ENCODE measurements at regions of chr7 and their contacts with region 1.

Region 1: GRCh38 chr7:92621026-92621540 is 30.9 kb upstream of the FAM133B start:
- DNase-seq: peak; percentile 79
- ATAC-seq: peak; percentile 79
- H3K4me3 ChIP-seq: peak overlapping the region; percentile 12; the same call in 1 of the 2 replicates
- H3K27ac ChIP-seq: peak overlapping the region; percentile 75
- H3K4me1 ChIP-seq: peaks cover 16% of the 10 kb centered on the region
- H3K27me3 ChIP-seq: no peaks in the 10 kb centered on the region
- CTCF ChIP-seq: peak; percentile 64 to 94 (median 76); a peak in 5 of 6 replicates
- EP300 ChIP-seq: no peak
- POLR2A ChIP-seq: no peak
- RAD21 ChIP-seq: peak; percentile 95

Region 2: GRCh38 chr7:92641921-92642511 is 20.9 kb after region 1 on chr7:
- CTCF ChIA-PET with region 1: interaction called, 16 read pairs
- POLR2A ChIA-PET with region 1: no interaction called
- RAD21 ChIA-PET with region 1: interaction called, 17 read pairs
- SMC1A ChIA-PET with region 1: interaction called, 18 read pairs
- in situ Hi-C with region 1: no loop called
- intact Hi-C with region 1: loop called (anchors 2 kb)
- DNase-seq: no peak
- ATAC-seq: peak; percentile 83
- H3K4me3 ChIP-seq: peak overlapping the region; percentile 39
- H3K27ac ChIP-seq: peak overlapping the region; percentile 73
- H3K4me1 ChIP-seq: peaks cover 25% of the 10 kb centered on the region
- H3K27me3 ChIP-seq: no peaks in the 10 kb centered on the region
- CTCF ChIP-seq: no peak
- EP300 ChIP-seq: peak; percentile 60 to 73; a peak in 3 of 4 replicates
- POLR2A ChIP-seq: no peak
- RAD21 ChIP-seq: 0 out of 2 replicates have a peak, but pooled peaks have one; percentile 4

Region 3: GRCh38 chr7:92674127-92674778 is 53.2 kb after region 1 on chr7:
- CTCF ChIA-PET with region 1: interaction called, 17 read pairs
- POLR2A ChIA-PET with region 1: no interaction called
- RAD21 ChIA-PET with region 1: no interaction called
- SMC1A ChIA-PET with region 1: no interaction called
- in situ Hi-C with region 1: no loop called
- intact Hi-C with region 1: no loop called
- DNase-seq: no peak
- ATAC-seq: peak; percentile 65
- H3K4me3 ChIP-seq: no peak overlapping the region
- H3K27ac ChIP-seq: peak overlapping the region; percentile 34
- H3K4me1 ChIP-seq: peaks cover 15% of the 10 kb centered on the region
- H3K27me3 ChIP-seq: no peaks in the 10 kb centered on the region
- CTCF ChIP-seq: no peak
- EP300 ChIP-seq: no peak
- POLR2A ChIP-seq: no peak
- RAD21 ChIP-seq: no peak

Region 4: GRCh38 chr7:92731335-92732063 is 110.4 kb after region 1 on chr7:
- CTCF ChIA-PET with region 1: no interaction called
- POLR2A ChIA-PET with region 1: no interaction called
- RAD21 ChIA-PET with region 1: no interaction called
- SMC1A ChIA-PET with region 1: no interaction called
- in situ Hi-C with region 1: no loop called
- intact Hi-C with region 1: no loop called
- DNase-seq: no peak
- ATAC-seq: peak; percentile 68
- H3K4me3 ChIP-seq: no peak overlapping the region
- H3K27ac ChIP-seq: peak overlapping the region; percentile 45
- H3K4me1 ChIP-seq: peaks cover 14% of the 10 kb centered on the region
- H3K27me3 ChIP-seq: no peaks in the 10 kb centered on the region
- CTCF ChIP-seq: no peak
- EP300 ChIP-seq: peak; percentile 29 to 45; a peak in 1 of 4 replicates
- POLR2A ChIP-seq: no peak
- RAD21 ChIP-seq: no peak

Region 5: DNA sequence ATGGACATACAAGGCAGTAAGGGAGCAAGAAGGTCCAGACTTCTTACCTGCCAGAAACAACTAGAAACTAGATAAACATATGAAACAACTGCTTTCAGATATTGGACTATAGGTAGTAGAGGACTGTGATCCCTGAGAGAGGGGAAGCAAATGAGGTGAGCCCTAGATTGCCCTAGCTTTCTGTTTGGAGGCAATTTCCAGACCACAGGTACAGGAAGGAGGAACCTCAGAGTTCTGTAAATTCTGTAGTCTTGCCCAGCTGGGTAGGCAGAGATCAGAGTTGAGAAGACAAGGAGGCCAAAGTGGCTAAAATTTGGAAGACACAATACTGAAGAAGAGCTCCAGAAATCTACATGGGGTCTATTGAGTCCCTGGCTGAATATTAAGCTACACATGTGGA is 194.3 kb after region 1 on chr7:
- CTCF ChIA-PET with region 1: interaction called, 4 read pairs
- POLR2A ChIA-PET with region 1: no interaction called
- RAD21 ChIA-PET with region 1: interaction called, 6 read pairs
- SMC1A ChIA-PET with region 1: interaction called, 15 read pairs
- in situ Hi-C with region 1: no loop called
- intact Hi-C with region 1: loop called (anchors 1 kb)
- DNase-seq: no peak
- ATAC-seq: peak; percentile 15
- H3K4me3 ChIP-seq: no peak overlapping the region
- H3K27ac ChIP-seq: peak overlapping the region; percentile 1; the same call in 1 of the 2 replicates
- H3K4me1 ChIP-seq: peaks cover 32% of the 10 kb centered on the region
- H3K27me3 ChIP-seq: no peaks in the 10 kb centered on the region
- CTCF ChIP-seq: no peak
- EP300 ChIP-seq: no peak
- POLR2A ChIP-seq: no peak
- RAD21 ChIP-seq: no peak

Region 6: GRCh38 chr7:92904292-92905131 is 283.4 kb after region 1 on chr7:
- CTCF ChIA-PET with region 1: no interaction called
- POLR2A ChIA-PET with region 1: no interaction called
- RAD21 ChIA-PET with region 1: interaction called, 3 read pairs
- SMC1A ChIA-PET with region 1: no interaction called
- in situ Hi-C with region 1: no loop called
- intact Hi-C with region 1: loop called (anchors 1 kb)
- DNase-seq: peak; percentile 84
- ATAC-seq: peak; percentile 99
- H3K4me3 ChIP-seq: peak overlapping the region; percentile 4; the same call in 1 of the 2 replicates
- H3K27ac ChIP-seq: peak overlapping the region; percentile 80
- H3K4me1 ChIP-seq: peaks cover 8% of the 10 kb centered on the region
- H3K27me3 ChIP-seq: no peaks in the 10 kb centered on the region
- CTCF ChIP-seq: no peak
- EP300 ChIP-seq: peak; percentile 80 to 92
- POLR2A ChIP-seq: no peak
- RAD21 ChIP-seq: no peak

Measured in GM12878 (cell line).